T-cell (primary cell): ENCODE measurements at regions of chr2 and their contacts with region 1.

Region 1: DNA sequence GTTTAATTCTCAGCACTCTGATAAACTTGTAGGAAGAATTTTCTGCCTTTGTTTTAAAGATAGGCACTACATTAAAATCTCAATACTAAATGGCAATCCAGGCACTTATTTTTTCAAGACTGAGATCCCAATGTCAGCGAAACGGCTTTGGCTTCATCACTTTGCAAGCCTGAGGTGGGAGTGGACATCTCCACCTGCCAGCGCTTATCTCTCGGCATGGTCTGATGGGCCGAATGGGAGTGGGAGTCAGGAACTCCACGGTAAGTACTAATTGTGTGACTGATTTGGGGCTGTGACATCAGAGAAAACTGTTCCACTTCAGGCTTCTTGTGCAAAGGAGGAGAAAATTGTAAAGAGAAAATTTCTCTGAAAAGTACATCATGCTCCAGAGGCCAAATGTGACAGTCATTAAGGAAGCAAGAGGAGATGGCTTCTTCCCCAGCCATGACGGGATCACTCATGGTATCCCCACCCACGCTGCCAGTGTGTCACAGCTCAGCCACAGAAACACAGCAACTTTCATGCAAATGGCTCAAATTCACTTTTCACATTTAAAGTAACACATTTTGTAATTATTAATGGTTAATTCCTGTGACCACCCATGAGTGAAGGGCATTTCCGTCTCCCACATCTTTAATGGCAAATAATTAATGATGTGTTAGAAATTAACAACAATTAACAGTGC is 385.5 kb upstream of the HNRNPA3 start:
- DNase-seq: no peak
- ATAC-seq: no peak
- H3K4me3 ChIP-seq: no peak overlapping the region
- H3K4me3 Mint-ChIP-seq: peak overlapping the region in 2 of 3 donors; percentile 35 to 50
- H3K27ac ChIP-seq: peak overlapping the region; percentile 52
- H3K27ac Mint-ChIP-seq: peak overlapping the region; percentile 80 to 92
- H3K4me1 ChIP-seq: peaks cover 17 to 31% of the 10 kb centered on the region in 2 experiments
- H3K4me1 Mint-ChIP-seq: peaks cover 46 to 60% (median 57%) of the 10 kb centered on the region in 3 donors
- H3K27me3 ChIP-seq: no peaks in the 10 kb centered on the region
- H3K27me3 Mint-ChIP-seq: peaks cover 5 to 6% of the 10 kb centered on the region in 2 donors

Region 2: DNA sequence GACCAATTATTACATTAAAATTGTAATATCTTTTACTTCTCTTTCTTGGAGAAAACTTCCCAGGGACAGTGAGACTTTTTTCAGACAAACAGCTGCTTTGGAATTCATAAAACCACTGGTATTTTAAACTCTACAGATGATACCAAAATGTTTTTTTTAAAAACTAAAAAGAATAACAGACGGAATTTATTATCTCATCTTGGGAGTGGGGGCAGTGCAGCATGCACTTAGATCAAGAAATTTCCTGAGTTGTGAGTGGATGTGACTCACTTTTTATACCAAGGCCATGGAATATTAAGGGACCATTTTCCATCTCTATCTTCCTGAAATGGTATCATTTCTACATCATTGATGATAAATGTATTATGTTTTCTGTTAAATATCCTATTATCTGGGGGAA is 37.4 kb before region 1 on chr2:
- CTCF ChIA-PET with region 1: no interaction called
- POLR2A ChIA-PET with region 1: no interaction called
- DNase-seq: no peak
- ATAC-seq: no peak
- H3K4me3 ChIP-seq: no peak overlapping the region
- H3K4me3 Mint-ChIP-seq: no peak overlapping the region
- H3K27ac ChIP-seq: no peak overlapping the region
- H3K27ac Mint-ChIP-seq: no peak overlapping the region
- H3K4me1 ChIP-seq: no peaks in the 10 kb centered on the region
- H3K4me1 Mint-ChIP-seq: no peaks in the 10 kb centered on the region
- H3K27me3 ChIP-seq: peaks cover 0 to 7% of the 10 kb centered on the region in 2 experiments
- H3K27me3 Mint-ChIP-seq: peaks cover 11 to 25% of the 10 kb centered on the region in 2 donors

Region 3: DNA sequence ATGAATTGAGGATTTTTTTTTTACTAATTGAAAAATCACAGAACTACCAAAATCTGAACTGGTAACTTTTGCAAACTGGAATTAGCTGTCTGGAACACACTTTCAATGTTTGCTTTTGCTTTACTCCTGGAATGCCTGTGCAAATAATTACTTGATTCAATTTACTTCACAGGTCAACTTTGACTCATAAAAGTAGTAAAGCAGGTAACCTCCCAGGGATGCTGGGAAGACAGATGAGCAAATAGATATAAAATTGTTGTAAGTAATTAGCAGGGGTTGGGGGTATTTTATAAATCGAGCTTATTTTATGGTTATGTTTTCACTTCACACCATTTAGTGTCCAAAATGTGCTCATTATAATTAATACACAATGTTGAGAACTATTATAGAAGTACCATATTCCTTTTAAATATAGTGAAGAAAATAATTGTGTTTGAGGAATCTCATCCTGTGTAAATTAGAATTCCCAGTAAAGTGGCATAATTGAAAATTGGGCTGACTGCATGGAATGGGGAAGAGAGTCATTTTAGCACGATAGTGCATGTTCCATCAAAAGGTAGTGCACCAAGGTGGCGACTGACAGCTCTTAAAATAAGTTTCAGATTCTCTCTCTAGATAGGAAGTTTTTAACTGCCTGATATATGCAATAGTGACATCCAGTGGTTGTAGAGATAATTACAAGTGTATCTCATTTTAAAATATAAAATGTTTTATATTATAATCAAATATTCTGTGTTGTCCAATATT is 12.6 kb before region 1 on chr2:
- CTCF ChIA-PET with region 1: interaction called, 4 to 11 read pairs
- POLR2A ChIA-PET with region 1: interaction called in 1 of 2 experiments, 3 read pairs
- DNase-seq: peak in 2 of 35 experiments; percentile 13 to 56
- ATAC-seq: peak in 3 of 4 experiments; percentile 42 to 66 (median 52)
- H3K4me3 ChIP-seq: no peak overlapping the region
- H3K4me3 Mint-ChIP-seq: no peak overlapping the region
- H3K27ac ChIP-seq: no peak overlapping the region
- H3K27ac Mint-ChIP-seq: no peak overlapping the region
- H3K4me1 ChIP-seq: peaks cover 2 to 6% of the 10 kb centered on the region in 2 experiments
- H3K4me1 Mint-ChIP-seq: peaks cover 13 to 28% (median 16%) of the 10 kb centered on the region in 3 donors
- H3K27me3 ChIP-seq: no peaks in the 10 kb centered on the region
- H3K27me3 Mint-ChIP-seq: peaks cover 4 to 6% of the 10 kb centered on the region in 2 donors

Region 4: GRCh38 chr2:177030451-177031105 is 203.5 kb after region 1 on chr2:
- CTCF ChIA-PET with region 1: no interaction called
- POLR2A ChIA-PET with region 1: no interaction called
- DNase-seq: no peak
- ATAC-seq: no peak
- H3K4me3 ChIP-seq: no peak overlapping the region
- H3K4me3 Mint-ChIP-seq: no peak overlapping the region
- H3K27ac ChIP-seq: no peak overlapping the region
- H3K27ac Mint-ChIP-seq: no peak overlapping the region
- H3K4me1 ChIP-seq: no peaks in the 10 kb centered on the region
- H3K4me1 Mint-ChIP-seq: no peaks in the 10 kb centered on the region
- H3K27me3 ChIP-seq: no peaks in the 10 kb centered on the region
- H3K27me3 Mint-ChIP-seq: peaks cover 7 to 13% of the 10 kb centered on the region in 2 donors